Adrenal gland (tissue), 19 donors: ENCODE measurements at regions of chr11 and their contacts with region 1.

Region 1: GRCh38 chr11:123478352-123478987 is 48.4 kb downstream of the GRAMD1B start:
- DNase-seq: peak; percentile 47 to 85 (median 73)
- H3K4me3 ChIP-seq: no peak overlapping the region
- H3K27ac ChIP-seq: peak overlapping the region; percentile 12 to 71 (median 42)
- H3K4me1 ChIP-seq: peaks cover 18 to 57% of the 10 kb centered on the region in 2 donors
- H3K27me3 ChIP-seq: no peaks in the 10 kb centered on the region
- CTCF ChIP-seq: peak; percentile 67 to 86 (median 76)
- POLR2A ChIP-seq: no peak

Region 2: DNA sequence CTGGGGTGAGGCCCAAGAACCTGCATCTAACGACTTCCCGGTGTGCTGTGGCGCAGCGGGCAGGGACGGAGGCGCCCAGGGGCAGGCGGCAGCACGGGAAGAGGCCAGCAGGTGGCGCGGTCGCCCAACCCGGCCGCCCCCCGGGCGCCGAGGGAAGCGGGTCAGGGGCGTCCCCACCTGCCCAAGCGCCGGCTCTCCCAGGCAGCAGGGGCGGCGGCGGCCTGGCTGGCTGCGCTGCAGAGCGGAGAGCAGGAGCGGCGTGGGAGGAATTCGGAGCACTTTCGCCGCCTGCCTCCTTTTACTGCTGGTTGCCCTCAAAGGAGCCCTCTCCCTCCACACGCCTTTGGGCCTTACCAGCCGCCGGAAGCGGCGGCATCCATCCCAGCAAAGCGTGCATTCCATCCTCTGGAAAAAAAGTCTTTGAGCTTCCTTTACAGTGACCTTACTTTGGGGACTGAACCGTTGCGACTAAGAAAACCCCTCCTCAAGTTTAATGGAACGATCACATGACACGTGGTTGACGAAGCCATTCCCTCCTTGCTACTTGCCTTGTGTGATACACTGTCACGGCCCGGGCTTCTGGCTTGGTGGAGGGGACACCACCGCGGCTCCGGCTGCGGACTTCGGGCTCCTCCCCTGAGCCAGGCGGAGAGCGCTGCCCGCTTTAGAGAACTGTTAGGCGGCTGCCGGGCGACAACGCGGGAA is 176.6 kb before region 1 on chr11:
- intact Hi-C with region 1: loop called in 1 of 2 experiments (anchors 5 kb)
- DNase-seq: peak; percentile 51 to 77 (median 72)
- H3K4me3 ChIP-seq: peak overlapping the region in 2 of 4 donors; percentile 26 to 53
- H3K27ac ChIP-seq: peak overlapping the region in 3 of 5 donors; percentile 9 to 73 (median 54)
- H3K4me1 ChIP-seq: peaks cover 0 to 16% of the 10 kb centered on the region in 2 donors
- H3K27me3 ChIP-seq: no peaks in the 10 kb centered on the region
- CTCF ChIP-seq: peak; percentile 51 to 95 (median 79)
- POLR2A ChIP-seq: no peak

Region 3: GRCh38 chr11:123407130-123407995 is 71.1 kb before region 1 on chr11:
- intact Hi-C with region 1: loop called (anchors 5 kb)
- DNase-seq: peak; percentile 81 to 92 (median 86)
- H3K4me3 ChIP-seq: no peak overlapping the region
- H3K27ac ChIP-seq: peak overlapping the region in 2 of 5 donors; percentile 25 to 36
- H3K4me1 ChIP-seq: peaks cover 10 to 26% of the 10 kb centered on the region in 2 donors
- H3K27me3 ChIP-seq: no peaks in the 10 kb centered on the region
- CTCF ChIP-seq: peak; percentile 57 to 86 (median 84)
- POLR2A ChIP-seq: no peak

Region 4: DNA sequence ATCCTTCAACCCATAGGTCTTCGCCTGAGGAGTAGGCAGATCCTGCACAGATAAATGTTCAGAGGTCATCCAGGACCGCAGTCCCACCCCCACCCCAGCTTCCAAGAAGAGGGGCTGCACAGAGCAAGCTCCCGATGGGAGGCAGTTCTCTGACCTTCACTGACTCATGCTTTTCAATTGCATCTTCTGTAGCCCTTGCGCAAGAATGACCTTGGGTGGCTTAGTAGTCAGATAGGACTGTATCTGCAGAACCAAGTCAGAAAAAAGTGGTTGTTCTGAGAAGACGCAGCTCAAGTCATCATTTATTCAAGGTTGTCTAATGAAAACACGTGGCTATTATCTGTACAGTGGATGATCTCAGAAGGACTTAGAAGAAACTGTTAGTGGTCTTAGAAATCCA is 64.8 kb before region 1 on chr11:
- intact Hi-C with region 1: loop called (anchors 5 kb)
- DNase-seq: peak; percentile 81 to 95 (median 90)
- H3K4me3 ChIP-seq: no peak overlapping the region
- H3K27ac ChIP-seq: peak overlapping the region in 2 of 5 donors; percentile 52 to 58
- H3K4me1 ChIP-seq: no peaks in the 10 kb centered on the region
- H3K27me3 ChIP-seq: no peaks in the 10 kb centered on the region
- CTCF ChIP-seq: no peak
- POLR2A ChIP-seq: no peak

Region 5: DNA sequence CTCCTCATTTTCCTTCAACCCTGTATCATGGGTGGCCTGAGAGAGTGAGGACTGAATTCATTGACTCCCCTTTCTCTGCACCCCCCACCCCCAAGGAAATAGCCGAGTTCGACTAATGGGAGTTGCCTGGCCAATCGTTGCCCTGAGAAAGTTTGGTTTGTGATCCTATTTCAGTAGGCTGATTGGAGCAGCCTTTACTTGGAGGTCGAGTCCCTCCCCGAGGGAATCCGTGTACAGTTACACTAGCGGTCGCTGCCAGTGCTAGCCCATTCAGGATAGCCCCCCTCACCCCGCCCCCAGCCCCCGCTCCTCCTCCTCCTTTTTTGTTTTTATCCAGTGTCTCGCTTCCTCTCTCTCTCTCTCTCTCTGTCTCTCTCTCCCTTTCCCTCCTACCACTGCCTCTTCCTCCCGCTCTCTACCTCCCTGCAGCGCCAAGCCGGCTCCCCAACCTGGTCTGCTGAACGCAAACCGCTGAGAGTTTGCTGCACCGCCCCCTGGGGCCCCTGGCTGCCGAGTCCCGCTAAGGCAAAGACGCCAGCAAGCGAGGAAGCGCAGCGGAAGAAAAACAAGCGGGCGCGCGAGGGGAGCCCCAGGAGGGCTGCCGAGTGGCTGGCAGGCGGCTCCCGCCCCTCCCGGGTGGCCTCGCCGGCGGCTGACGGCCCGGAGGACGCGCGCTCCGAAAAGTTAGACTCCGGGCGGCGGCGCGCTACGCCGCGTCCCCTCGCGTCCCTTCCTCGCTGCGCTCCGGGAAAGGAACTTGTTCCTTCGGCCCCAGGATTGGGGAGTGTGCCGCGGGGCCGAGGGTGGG is 48.4 kb before region 1 on chr11 and contains the start of gene GRAMD1B:
- intact Hi-C with region 1: loop called in 1 of 2 experiments (anchors 5 kb)
- DNase-seq: peak; percentile 85 to 95 (median 92)
- H3K4me3 ChIP-seq: peak within 1 kb of the TSS in 3 of 4 donors; percentile 67 to 88 (median 76)
- H3K27ac ChIP-seq: peak within 1 kb of the TSS; percentile 88 to 96 (median 93)
- H3K4me1 ChIP-seq: peaks cover 37 to 39% of the 10 kb centered on the region in 2 donors
- H3K27me3 ChIP-seq: no peaks in the 10 kb centered on the region
- CTCF ChIP-seq: peak in 3 of 6 experiments; percentile 18 to 31 (median 25)
- POLR2A ChIP-seq: peak; percentile 45 to 65
- total RNA-seq, gene GRAMD1B: 178 to 1,898 (median 290) TPM